Activated CD4-positive, alpha-beta T cell treated with anti-CD3 and anti-CD28 coated beads for 36 hours (primary cell): ENCODE measurements at regions of chr10 and their contacts with region 1.

Region 1: DNA sequence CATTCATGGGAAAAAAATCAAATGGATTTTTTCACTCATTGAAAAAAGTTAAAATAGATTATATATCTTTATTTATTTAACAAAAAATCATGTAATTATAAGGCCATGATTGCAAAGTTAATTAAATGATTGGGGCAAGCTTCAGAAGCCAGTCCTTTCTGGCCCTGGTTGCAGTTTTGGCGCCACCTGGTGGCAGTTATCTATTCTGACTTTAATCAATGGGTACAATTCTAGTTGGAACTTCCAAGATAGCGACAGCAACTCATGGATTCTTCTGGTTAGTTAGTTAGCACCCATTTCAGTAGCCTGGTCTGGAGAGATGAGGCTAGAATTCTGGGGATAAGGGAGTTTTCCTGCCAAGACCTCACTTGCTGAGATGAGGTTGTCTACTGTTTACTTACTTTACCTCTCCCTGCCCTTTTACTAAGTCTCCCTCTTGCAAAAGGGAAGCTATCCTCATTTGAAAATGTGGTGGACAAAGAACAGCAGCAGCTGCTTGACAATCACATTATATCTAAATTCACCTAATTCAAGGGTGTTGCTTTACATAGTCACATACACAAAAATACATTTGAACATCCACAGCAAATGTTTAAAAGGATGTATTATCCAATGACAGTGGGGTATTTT is 42.3 kb downstream of the NOC3L start:
- DNase-seq: peak; percentile 82
- ATAC-seq: no peak
- H3K4me3 Mint-ChIP-seq: no peak overlapping the region
- H3K27ac Mint-ChIP-seq: no peak overlapping the region
- H3K4me1 Mint-ChIP-seq: no peaks in the 10 kb centered on the region
- H3K27me3 Mint-ChIP-seq: no peaks in the 10 kb centered on the region

Region 2: DNA sequence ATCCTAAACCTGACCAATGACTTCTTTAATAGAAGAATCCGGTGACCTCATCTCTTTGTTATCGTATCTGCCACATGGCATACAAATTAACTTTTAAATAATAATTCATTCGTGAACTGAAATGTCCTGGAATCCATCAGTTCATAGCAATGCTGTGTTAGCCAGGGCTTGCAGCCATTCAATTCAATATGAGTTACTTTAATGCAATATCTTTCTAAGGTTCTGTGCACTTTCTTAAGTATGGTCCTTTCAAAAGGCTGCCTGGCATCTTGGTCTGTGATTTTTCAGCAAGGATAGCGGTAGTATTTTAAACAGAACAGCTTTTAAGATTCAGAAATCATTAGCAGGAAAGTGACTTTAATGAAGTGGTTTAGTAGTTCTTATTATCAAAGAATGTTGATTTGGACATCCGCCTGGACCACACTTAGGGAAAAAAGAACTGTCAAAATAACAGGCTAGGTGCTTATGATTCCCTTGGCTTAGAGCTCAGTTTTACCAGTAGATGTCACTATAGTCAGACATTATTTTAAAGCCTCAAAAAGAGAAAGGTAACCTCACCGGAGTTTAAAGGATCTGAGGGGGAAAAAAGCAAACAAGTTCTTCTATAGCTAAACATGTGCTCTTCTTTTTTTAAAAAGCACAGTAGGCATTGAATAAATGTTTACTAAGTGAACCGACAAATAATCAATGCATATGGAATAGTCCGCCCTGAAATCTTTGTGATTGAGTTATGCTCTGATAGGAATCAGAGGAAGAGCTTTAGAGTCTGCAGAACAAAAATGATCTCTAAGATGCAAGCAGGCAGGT is 403.9 kb before region 1 on chr10:
- CTCF ChIA-PET with region 1: interaction called, 19 read pairs
- POLR2A ChIA-PET with region 1: no interaction called
- intact Hi-C with region 1: loop called (anchors 1 kb)
- DNase-seq: no peak
- ATAC-seq: no peak
- H3K4me3 Mint-ChIP-seq: no peak overlapping the region
- H3K27ac Mint-ChIP-seq: no peak overlapping the region
- H3K4me1 Mint-ChIP-seq: no peaks in the 10 kb centered on the region
- H3K27me3 Mint-ChIP-seq: no peaks in the 10 kb centered on the region

Region 3: GRCh38 chr10:94287336-94287735 is 33.1 kb before region 1 on chr10:
- CTCF ChIA-PET with region 1: interaction called, 10 read pairs
- POLR2A ChIA-PET with region 1: interaction called, 3 read pairs
- intact Hi-C with region 1: no loop called
- DNase-seq: no peak
- ATAC-seq: no peak
- H3K4me3 Mint-ChIP-seq: no peak overlapping the region
- H3K27ac Mint-ChIP-seq: no peak overlapping the region
- H3K4me1 Mint-ChIP-seq: no peaks in the 10 kb centered on the region
- H3K27me3 Mint-ChIP-seq: peaks cover 30% of the 10 kb centered on the region

Region 4: GRCh38 chr10:94334857-94335256 is 14.5 kb after region 1 on chr10:
- CTCF ChIA-PET with region 1: interaction called, 40 read pairs
- POLR2A ChIA-PET with region 1: no interaction called
- intact Hi-C with region 1: no loop called
- DNase-seq: no peak
- ATAC-seq: no peak
- H3K4me3 Mint-ChIP-seq: no peak overlapping the region
- H3K27ac Mint-ChIP-seq: no peak overlapping the region
- H3K4me1 Mint-ChIP-seq: no peaks in the 10 kb centered on the region
- H3K27me3 Mint-ChIP-seq: no peaks in the 10 kb centered on the region

Region 5: GRCh38 chr10:94439275-94439861 is 119.0 kb after region 1 on chr10:
- CTCF ChIA-PET with region 1: interaction called, 8 read pairs
- POLR2A ChIA-PET with region 1: no interaction called
- intact Hi-C with region 1: loop called in 1 of 2 experiments (anchors 1 kb)
- DNase-seq: no peak
- ATAC-seq: no peak
- H3K4me3 Mint-ChIP-seq: no peak overlapping the region
- H3K27ac Mint-ChIP-seq: no peak overlapping the region
- H3K4me1 Mint-ChIP-seq: no peaks in the 10 kb centered on the region
- H3K27me3 Mint-ChIP-seq: peaks cover 18% of the 10 kb centered on the region